ENCODE measurements at regions of chr19 and their contacts with region 1.

Region 1: DNA sequence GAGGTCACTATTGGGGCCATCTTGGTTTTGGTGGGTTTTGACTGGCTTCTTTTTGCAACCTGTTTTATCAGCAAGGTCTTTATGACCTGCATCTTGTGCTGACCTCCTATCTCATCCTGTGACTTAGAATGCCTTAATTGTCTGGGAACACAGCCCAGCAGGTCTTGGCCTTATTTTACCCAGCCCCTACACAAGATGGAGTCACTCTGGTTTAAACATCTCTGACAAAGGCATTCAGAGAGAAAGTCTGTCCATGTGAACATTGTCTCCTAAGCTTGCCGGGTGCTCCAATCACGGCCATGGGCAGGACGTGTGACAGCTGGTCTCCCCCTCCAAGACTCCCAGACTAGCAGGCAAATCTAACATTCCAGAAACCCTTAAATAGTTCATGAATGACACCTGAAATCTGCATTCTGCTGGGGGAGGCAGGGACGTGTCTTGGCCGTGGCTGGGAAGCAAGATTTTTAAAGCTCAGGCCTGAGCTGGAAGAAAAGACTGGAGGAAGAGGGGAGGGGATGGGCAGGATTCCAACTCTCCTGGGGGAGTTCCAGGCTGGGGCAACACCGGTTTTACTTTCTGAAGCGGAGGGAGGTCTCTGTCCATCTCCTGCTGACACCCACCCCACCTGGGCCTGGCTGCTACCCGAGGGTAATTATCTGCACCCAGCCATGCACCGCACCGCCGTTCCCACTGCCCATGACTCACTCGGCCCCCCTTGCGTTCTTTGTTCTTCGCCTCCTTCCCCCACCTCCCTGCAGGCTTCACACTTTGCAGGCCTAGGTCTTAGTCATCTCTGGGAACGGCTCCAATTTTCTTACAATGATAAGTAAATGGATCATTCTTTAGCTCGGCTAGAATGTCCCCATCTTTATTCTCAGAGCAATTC is 11.6 kb upstream of the OR1M1 start:
- DNase-seq: peak; percentile 70 to 87 (median 81)
- ATAC-seq: peak; percentile 92
- H3K4me3 ChIP-seq: no peak overlapping the region
- H3K27ac ChIP-seq: peak overlapping the region; percentile 48 to 72 (median 66)
- H3K4me1 ChIP-seq: peaks cover 6% of the 10 kb centered on the region
- H3K27me3 ChIP-seq: no peaks in the 10 kb centered on the region
- CTCF ChIP-seq: no peak
- POLR2A ChIP-seq: no peak

Region 2: DNA sequence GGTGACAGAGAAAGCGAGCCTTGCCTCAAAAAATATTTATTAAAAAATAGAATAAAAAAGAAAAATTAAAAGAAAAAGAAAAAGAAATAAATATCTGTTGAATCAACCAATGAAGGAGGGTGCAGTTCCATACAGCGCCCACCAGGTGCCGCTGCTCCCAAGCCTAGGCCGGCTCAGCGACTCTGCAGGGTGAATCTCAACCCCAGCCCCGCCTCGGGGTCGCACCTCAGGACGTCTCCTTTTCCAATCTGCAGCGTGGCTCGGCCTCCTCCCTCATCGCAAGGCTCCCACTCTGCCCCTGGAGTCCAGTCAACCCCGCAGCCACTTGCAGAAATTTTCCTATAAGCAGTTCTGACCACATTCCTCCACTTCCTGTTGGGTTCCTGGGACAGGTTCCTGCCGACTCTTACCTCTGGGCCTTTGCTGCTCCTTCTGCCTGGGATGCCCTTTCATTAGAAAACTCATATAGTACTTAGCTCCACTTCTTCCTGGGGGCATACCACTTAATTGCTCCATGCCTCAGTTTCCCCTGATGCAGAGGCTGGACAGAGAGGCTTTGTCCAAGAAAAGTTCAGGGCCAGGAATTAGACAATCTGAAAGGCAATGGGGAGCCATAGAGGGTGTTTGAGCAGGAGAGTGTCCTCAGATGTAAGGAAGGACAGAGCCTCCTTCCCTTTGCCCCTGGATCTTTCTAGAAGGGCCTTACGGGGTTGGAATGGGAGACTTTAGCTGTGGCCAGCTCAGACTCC is 420.5 kb before region 1 on chr19:
- intact Hi-C with region 1: loop called (anchors 5 kb)
- DNase-seq: peak; percentile 34 to 52 (median 45)
- ATAC-seq: peak; percentile 69
- H3K4me3 ChIP-seq: no peak overlapping the region
- H3K27ac ChIP-seq: no peak overlapping the region
- H3K4me1 ChIP-seq: peaks cover 4% of the 10 kb centered on the region
- H3K27me3 ChIP-seq: no peaks in the 10 kb centered on the region
- CTCF ChIP-seq: peak; percentile 83 to 100 (median 99)
- POLR2A ChIP-seq: no peak

Region 3: GRCh38 chr19:8884416-8884815 is 190.9 kb before region 1 on chr19:
- intact Hi-C with region 1: no loop called
- DNase-seq: no peak
- ATAC-seq: no peak
- H3K4me3 ChIP-seq: no peak overlapping the region
- H3K27ac ChIP-seq: no peak overlapping the region
- H3K4me1 ChIP-seq: no peaks in the 10 kb centered on the region
- H3K27me3 ChIP-seq: no peaks in the 10 kb centered on the region
- CTCF ChIP-seq: no peak
- POLR2A ChIP-seq: no peak

Region 4: GRCh38 chr19:9115307-9115813 is 40.1 kb after region 1 on chr19 and contains the start of gene OR7G1:
- intact Hi-C with region 1: no loop called
- DNase-seq: no peak
- ATAC-seq: no peak
- H3K4me3 ChIP-seq: no peak within 1 kb of the TSS
- H3K27ac ChIP-seq: no peak within 1 kb of the TSS
- H3K4me1 ChIP-seq: no peaks in the 10 kb centered on the region
- H3K27me3 ChIP-seq: no peaks in the 10 kb centered on the region
- CTCF ChIP-seq: no peak
- POLR2A ChIP-seq: no peak
- total RNA-seq, gene OR7G1: not detected

Region 5: GRCh38 chr19:9149976-9150375 is 74.7 kb after region 1 on chr19:
- intact Hi-C with region 1: no loop called
- DNase-seq: no peak
- ATAC-seq: no peak
- H3K4me3 ChIP-seq: no peak overlapping the region
- H3K27ac ChIP-seq: no peak overlapping the region
- H3K4me1 ChIP-seq: no peaks in the 10 kb centered on the region
- H3K27me3 ChIP-seq: no peaks in the 10 kb centered on the region
- CTCF ChIP-seq: no peak
- POLR2A ChIP-seq: no peak